ENCODE measurements at regions of chr5 and their contacts with region 1.

Region 1: GRCh38 chr5:160342403-160342941 is 28.0 kb downstream of the C1QTNF2 start:
- DNase-seq: no peak
- H3K4me3 ChIP-seq: no peak overlapping the region
- H3K27ac ChIP-seq: no peak overlapping the region
- H3K4me1 ChIP-seq: peaks cover 14% of the 10 kb centered on the region
- H3K27me3 ChIP-seq: no peaks in the 10 kb centered on the region
- CTCF ChIP-seq: no peak

Region 2: DNA sequence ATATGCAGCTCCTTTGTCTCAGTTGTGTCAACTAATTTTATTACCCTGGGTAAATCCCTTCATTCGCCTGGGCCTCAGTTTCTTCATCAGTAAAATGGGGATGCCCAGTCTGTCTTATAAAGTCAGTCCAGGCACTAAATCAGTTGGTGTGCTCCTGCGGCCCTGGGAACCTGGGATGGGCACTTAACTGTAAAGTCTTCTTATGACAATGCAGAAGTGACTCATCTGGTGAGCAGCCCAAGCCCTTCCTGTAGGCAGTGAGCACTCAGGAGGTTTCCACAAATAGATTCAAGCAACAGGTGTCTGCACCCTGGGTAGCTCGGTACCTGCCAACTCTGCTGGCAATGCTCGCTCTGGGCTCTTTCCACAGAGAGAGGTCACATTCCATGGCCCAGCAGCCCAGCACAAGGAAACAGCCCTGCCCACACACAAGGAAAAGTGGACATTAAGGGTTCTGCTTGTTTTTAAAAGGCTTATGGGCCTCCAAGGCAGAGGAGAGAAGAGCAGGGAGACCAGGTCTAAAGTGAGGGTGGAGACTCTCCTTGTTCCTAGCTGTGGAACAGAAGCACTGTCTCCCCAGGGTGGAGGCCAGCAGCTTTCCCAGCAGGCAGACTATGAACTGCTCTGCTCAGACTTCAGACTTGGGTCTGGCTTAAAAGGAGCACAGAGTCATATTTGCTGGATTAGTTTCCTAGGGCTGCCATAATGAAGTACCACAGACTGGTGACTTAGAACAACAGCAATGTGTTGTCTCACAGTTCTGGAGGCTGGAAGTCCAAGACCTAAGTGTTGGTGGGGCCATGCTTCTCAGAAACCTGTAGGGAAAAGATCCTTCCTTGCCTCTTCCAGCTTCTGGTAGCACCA is 515.9 kb before region 1 on chr5:
- intact Hi-C with region 1: no loop called
- DNase-seq: no peak
- H3K4me3 ChIP-seq: no peak overlapping the region
- H3K27ac ChIP-seq: no peak overlapping the region
- H3K4me1 ChIP-seq: peaks cover 17% of the 10 kb centered on the region
- H3K27me3 ChIP-seq: peaks cover 7% of the 10 kb centered on the region
- CTCF ChIP-seq: no peak

Region 3: GRCh38 chr5:160199410-160199911 is 143.0 kb before region 1 on chr5:
- intact Hi-C with region 1: loop called (anchors 5 kb)
- DNase-seq: peak; percentile 74
- H3K4me3 ChIP-seq: peak overlapping the region; percentile 63
- H3K27ac ChIP-seq: no peak overlapping the region
- H3K4me1 ChIP-seq: peaks cover 24% of the 10 kb centered on the region
- H3K27me3 ChIP-seq: no peaks in the 10 kb centered on the region
- CTCF ChIP-seq: peak; percentile 98

Measured in left ventricle myocardium inferior (tissue), 1 donor.